Activated CD4-positive, alpha-beta memory T cell treated with anti-CD3 and anti-CD28 coated beads for 36 hours (primary cell): ENCODE measurements at regions of chr9 and their contacts with region 1.

Region 1: DNA sequence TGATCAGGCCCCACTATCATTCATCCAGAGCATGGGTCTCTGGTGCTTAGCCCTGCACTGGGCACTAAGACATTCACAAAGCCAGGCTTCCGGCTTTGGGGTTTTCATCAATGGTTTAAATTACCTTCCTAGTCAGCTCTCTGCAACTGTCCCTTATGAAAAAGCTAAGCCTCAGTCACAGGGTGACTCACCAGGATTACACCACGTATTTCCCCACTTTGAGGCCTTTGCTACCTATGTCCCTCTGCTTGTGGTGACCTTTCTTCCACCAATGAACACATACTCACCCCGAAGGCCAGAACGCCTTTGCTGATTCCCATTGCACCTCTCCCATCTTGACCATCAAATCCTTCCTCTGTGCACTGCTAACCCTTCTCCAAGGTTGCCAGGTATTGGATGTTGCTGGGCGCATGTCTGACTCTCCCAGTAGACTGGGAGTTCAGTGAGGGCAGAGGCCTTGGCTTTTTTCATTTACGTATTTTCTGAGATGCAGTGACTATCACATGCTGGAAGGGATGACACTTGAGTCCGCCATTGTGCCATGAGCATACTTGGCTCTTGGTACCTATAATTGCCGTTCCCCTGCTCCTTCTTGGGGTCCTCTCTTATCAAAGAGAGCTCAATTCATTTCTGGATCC is 58.7 kb upstream of the TNFSF8 start:
- DNase-seq: peak; percentile 75
- H3K4me3 Mint-ChIP-seq: peak overlapping the region; percentile 5
- H3K27ac Mint-ChIP-seq: peak overlapping the region; percentile 94
- H3K4me1 Mint-ChIP-seq: peaks cover 65% of the 10 kb centered on the region
- H3K27me3 Mint-ChIP-seq: no peaks in the 10 kb centered on the region

Region 2: DNA sequence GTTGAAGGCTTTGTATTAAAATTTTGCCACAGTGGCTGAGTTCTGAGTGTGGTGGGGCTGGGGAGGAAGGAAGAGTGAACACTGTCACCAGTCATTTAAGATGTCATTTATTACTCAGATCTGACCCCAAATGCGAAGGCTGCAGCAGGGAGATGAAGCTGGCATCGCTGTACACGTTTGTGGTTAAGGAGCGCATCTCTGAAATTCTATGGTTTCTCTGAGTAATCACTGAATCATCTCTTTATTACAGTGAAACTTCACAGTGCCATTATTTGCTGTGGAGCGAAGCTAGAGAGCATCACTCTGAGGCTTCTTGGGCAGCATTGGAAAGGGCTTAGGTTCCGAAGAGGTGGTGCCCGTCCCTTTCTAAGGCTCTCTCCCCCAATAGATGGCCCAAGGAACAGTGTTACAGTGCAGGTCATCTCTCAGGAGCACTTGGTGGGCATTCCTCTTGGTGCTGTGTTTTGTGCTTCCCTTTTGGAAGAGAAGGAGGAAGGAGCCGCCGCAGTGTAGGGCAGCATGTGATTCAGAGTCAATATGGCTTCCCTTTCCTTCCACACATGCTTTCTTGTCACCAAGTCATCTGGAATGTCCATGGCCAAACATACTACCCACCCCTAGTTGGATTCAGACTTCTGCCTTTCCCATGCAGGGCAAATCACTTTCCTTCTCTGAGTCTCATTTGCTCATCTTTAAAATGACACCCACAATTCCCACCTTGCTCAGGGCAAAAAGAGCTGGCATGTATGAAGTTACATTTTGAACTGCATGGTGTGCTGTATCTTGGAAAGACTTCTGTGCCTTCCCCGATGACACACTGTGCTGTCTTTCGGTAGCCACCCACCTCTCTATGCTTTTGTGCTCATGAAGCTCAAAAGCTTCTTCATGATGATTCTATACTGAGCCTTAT is 297.8 kb before region 1 on chr9:
- CTCF ChIA-PET with region 1: interaction called, 5 read pairs
- POLR2A ChIA-PET with region 1: interaction called, 24 read pairs
- intact Hi-C with region 1: loop called (anchors 1 kb)
- DNase-seq: peak; percentile 88
- H3K4me3 Mint-ChIP-seq: peak overlapping the region; percentile 55
- H3K27ac Mint-ChIP-seq: peak overlapping the region; percentile 99
- H3K4me1 Mint-ChIP-seq: peaks cover 87% of the 10 kb centered on the region
- H3K27me3 Mint-ChIP-seq: no peaks in the 10 kb centered on the region

Region 3: GRCh38 chr9:114894801-114895433 is 94.2 kb before region 1 on chr9:
- CTCF ChIA-PET with region 1: interaction called, 3 read pairs
- POLR2A ChIA-PET with region 1: interaction called, 11 read pairs
- intact Hi-C with region 1: loop called (anchors 1 kb)
- DNase-seq: peak; percentile 76
- H3K4me3 Mint-ChIP-seq: no peak overlapping the region
- H3K27ac Mint-ChIP-seq: peak overlapping the region; percentile 77
- H3K4me1 Mint-ChIP-seq: peaks cover 52% of the 10 kb centered on the region
- H3K27me3 Mint-ChIP-seq: no peaks in the 10 kb centered on the region

Region 4: DNA sequence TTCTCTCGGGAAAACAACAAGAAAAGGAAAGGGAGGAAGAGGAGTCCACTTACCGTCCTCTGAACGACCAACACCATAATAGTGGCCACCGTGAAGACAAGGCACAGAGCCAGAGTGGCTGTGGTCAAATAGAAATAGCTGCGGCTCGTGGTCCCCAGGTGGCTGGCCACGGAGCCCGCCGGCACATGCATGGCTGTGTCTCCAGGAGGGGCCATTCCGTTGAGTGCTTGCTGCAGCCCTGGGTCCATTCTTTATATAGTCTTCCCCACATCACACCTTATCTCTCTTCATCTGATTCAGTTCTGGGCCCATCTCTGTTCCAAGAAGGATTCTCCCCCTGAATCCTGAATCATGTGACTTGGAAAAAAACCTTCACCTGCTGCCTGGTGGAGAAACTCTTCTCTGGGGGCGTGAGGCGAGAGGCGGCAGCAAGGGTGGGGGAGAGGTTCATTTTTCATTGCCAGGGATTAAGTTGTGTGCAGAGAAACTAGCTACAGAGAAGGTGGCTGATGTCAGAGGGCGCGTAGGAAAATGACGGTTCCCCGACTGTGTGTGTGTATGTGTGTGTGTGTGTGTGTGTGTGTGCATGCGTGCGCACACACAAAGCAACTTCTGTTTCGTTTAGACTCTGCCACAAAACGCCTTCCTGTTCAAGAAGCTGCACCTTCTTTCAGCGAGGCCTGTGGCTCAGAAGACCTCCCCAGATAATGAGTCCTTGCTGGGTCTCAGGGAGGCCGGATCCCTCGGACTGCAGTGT is 58.8 kb before region 1 on chr9 and contains the start of gene TNFSF8:
- CTCF ChIA-PET with region 1: interaction called, 4 read pairs
- POLR2A ChIA-PET with region 1: interaction called, 44 read pairs
- intact Hi-C with region 1: loop called (anchors 1 kb)
- DNase-seq: peak; percentile 90
- H3K4me3 Mint-ChIP-seq: peak within 1 kb of the TSS; percentile 94
- H3K27ac Mint-ChIP-seq: peak within 1 kb of the TSS; percentile 97
- H3K4me1 Mint-ChIP-seq: peaks cover 44% of the 10 kb centered on the region
- H3K27me3 Mint-ChIP-seq: no peaks in the 10 kb centered on the region
- total RNA-seq, gene TNFSF8: 37.9 to 38.7 TPM

Region 5: GRCh38 chr9:115000217-115000639 is 11.1 kb after region 1 on chr9:
- CTCF ChIA-PET with region 1: interaction called, 22 read pairs
- POLR2A ChIA-PET with region 1: interaction called, 71 read pairs
- intact Hi-C with region 1: loop called (anchors 1 kb)
- DNase-seq: peak; percentile 71
- H3K4me3 Mint-ChIP-seq: peak overlapping the region; percentile 72
- H3K27ac Mint-ChIP-seq: peak overlapping the region; percentile 85
- H3K4me1 Mint-ChIP-seq: peaks cover 73% of the 10 kb centered on the region
- H3K27me3 Mint-ChIP-seq: no peaks in the 10 kb centered on the region

Region 6: DNA sequence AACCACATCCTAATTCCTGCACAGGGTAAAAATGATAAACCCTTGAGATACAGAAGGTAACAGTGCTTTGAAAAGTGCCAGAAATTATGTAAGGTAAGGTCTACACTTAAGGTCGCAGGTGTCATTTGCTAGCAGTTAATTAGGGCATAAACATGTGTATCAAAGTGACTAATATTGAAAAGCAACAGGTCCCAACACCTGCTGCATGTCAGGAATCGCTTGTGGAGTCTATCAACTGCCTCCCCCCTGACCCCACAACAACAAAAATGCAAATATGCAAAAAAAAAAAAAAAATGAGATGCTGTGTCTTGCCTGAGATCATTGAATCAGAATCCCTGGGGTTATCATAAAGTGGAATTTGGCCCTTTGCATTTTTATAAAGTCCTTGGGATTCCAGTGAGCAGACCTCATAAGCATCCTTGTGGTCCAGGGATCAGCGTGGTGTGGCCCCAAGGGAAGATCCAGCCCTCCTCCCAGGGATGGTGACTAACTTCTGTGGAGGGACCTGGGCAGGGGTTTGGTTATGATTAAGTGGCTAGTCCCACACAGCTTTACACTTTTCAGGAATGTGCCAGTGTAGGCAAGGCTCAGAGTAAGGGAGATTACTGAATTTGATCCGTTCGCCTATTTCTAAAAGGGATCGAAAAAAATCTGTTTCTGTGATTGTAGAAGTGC is 33.8 kb after region 1 on chr9:
- CTCF ChIA-PET with region 1: no interaction called
- POLR2A ChIA-PET with region 1: no interaction called
- intact Hi-C with region 1: no loop called
- DNase-seq: no peak
- H3K4me3 Mint-ChIP-seq: no peak overlapping the region
- H3K27ac Mint-ChIP-seq: no peak overlapping the region
- H3K4me1 Mint-ChIP-seq: no peaks in the 10 kb centered on the region
- H3K27me3 Mint-ChIP-seq: peaks cover 2% of the 10 kb centered on the region

Region 7: DNA sequence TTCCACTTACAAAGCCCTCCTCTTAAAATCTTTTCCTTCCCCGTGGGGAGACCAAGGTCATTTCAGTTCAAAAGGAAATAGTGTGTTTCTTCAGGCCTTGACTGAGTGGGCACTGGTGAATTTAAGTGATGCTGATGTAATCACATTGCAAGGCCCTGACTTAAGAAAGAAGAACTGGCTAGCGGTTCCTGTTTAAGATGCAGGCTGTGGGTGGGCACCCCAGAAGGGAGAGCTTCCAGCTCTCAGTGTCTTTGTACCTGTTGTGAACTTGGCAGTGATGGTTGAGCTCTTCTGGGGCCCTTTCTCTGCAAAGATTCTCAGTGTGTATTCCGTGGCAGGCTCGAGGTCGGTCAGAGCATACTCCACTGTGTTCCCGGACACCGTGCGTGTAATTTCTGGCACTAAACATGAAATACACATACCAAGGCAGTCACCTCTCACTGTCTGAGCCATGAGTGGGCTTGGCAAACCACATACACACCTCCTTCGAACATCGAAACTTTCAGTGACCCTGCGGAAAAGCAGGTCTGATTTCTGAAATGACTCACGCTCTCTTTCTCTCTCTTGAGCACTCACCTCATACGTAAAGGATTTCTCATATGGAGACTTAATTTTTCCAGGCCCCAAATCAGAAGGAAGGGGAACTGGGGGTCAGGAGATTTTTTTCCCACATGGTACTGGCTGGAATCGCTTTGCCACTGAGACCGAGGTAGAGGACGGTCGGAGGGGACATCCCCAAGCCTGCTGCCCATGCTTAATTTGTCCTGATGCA is 46.9 kb after region 1 on chr9:
- CTCF ChIA-PET with region 1: no interaction called
- POLR2A ChIA-PET with region 1: interaction called, 4 read pairs
- intact Hi-C with region 1: loop called (anchors 1 kb)
- DNase-seq: peak; percentile 83
- H3K4me3 Mint-ChIP-seq: peak overlapping the region; percentile 62
- H3K27ac Mint-ChIP-seq: peak overlapping the region; percentile 91
- H3K4me1 Mint-ChIP-seq: peaks cover 33% of the 10 kb centered on the region
- H3K27me3 Mint-ChIP-seq: no peaks in the 10 kb centered on the region